AG04449 (cell line): ENCODE measurements at regions of chr4 and their contacts with region 1.

Region 1: GRCh38 chr4:154506253-154506652 is 14.7 kb upstream of the DCHS2 start:
- DNase-seq: no peak
- H3K4me3 ChIP-seq: no peak overlapping the region
- CTCF ChIP-seq: peak; percentile 35

Region 2: GRCh38 chr4:153785910-153786721 is 720.1 kb before region 1 on chr4:
- CTCF ChIA-PET with region 1: interaction called, 19 read pairs
- POLR2A ChIA-PET with region 1: no interaction called
- DNase-seq: no peak
- H3K4me3 ChIP-seq: no peak overlapping the region
- CTCF ChIP-seq: no peak

Region 3: DNA sequence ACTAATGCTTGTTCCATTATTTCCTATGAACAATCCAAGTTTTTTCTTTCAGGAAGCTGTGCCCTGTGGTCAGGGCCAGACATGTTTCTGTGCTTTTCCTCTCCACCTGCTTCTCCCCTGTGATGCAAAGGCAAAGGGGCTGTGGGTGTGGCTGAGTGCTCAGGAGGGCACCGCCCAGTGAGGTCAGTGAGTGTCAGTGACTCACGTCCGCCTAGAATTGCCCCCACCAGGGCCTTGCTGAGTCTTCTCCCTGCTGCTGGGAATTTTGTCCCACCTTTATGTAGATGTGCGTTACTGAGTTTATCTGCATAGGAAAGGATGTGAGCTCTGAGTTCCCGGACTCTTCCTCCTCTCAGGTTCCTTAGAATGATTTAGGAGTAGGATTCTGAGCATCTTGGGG is 297.8 kb before region 1 on chr4:
- CTCF ChIA-PET with region 1: no interaction called
- POLR2A ChIA-PET with region 1: no interaction called
- DNase-seq: no peak
- H3K4me3 ChIP-seq: no peak overlapping the region
- CTCF ChIP-seq: no peak

Region 4: DNA sequence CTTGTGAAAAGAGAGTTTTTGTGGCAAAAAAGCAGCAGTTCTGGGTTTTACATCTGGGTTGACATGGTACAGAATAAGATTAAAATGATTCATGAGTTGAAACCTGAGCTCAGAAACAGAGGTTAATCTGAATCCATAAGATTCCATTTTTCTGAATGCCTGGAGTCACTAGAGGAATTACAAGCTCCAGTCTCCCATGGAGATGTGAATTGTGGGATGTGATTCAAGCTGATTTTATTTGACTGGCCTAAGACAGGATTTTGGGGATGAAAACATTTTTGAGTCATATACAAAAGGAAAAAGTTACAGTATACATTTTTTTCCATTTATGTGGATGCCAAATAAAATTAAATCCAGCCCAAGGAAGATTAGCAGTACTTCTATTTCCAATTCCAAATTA is 435.9 kb after region 1 on chr4:
- CTCF ChIA-PET with region 1: no interaction called
- POLR2A ChIA-PET with region 1: no interaction called
- DNase-seq: no peak
- H3K4me3 ChIP-seq: no peak overlapping the region
- CTCF ChIP-seq: no peak